ENCODE measurements at regions of chr21 and their contacts with region 1.

Region 1: GRCh38 chr21:28745131-28746016 is 247.3 kb downstream of the LTN1 start:
- DNase-seq: peak; percentile 87
- H3K4me3 Mint-ChIP-seq: no peak overlapping the region
- H3K27ac Mint-ChIP-seq: no peak overlapping the region
- H3K4me1 Mint-ChIP-seq: no peaks in the 10 kb centered on the region
- H3K27me3 Mint-ChIP-seq: peaks cover 4% of the 10 kb centered on the region

Region 2: GRCh38 chr21:27700974-27701614 is 1044.3 kb before region 1 on chr21:
- CTCF ChIA-PET with region 1: interaction called, 11 read pairs
- intact Hi-C with region 1: loop called (anchors 1 kb)
- DNase-seq: peak; percentile 80
- H3K4me3 Mint-ChIP-seq: no peak overlapping the region
- H3K27ac Mint-ChIP-seq: no peak overlapping the region
- H3K4me1 Mint-ChIP-seq: peaks cover 2% of the 10 kb centered on the region
- H3K27me3 Mint-ChIP-seq: no peaks in the 10 kb centered on the region

Region 3: DNA sequence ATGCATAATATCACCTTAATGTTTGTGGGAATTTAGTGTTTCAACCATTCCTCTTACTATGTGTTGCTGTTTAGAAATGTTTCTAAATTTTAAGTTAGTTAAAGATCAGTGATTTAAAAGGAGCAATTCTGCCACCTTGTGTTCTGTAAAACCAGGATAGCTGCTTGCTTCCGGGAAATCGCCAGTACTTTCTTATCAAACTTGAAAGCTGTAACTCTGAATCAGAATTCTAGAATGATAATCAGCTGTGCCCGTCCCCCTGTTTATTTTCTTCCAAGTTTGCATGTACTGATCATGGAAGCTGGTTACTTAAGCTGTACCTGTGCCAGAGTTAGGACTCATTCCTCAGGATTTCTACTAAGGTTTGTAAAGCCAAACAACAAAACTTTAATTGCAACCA is 409.1 kb before region 1 on chr21:
- CTCF ChIA-PET with region 1: interaction called, 5 read pairs
- intact Hi-C with region 1: loop called (anchors 2 kb)
- DNase-seq: no peak
- H3K4me3 Mint-ChIP-seq: no peak overlapping the region
- H3K27ac Mint-ChIP-seq: no peak overlapping the region
- H3K4me1 Mint-ChIP-seq: peaks cover 2% of the 10 kb centered on the region
- H3K27me3 Mint-ChIP-seq: no peaks in the 10 kb centered on the region

Region 4: DNA sequence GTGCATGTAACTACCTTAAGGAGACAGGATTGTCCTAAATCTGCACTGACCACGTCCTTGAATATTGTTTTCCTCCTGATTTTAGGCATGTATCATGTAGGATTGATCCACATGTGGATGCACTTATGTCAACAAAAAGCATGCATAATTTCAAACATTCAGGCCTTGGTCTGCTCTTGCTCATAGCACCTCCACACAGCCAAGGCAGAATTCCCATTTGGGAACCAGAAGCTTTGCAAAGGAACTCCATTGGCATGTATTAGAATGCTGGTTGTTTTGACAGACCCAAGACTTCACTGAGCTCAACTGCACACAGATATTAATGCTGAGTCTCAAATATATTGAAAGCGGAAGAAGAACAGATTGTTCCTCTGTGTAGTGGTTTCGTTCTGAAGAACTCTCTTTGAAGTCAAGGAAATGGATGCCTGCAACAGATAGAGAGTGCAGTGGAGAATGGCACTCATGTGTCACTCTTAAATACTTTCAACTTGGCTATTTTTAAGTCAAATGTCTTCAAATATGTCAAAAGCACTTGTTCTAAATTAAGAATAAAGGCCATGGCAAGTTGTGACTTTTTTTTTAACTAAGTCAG is 140.3 kb before region 1 on chr21:
- CTCF ChIA-PET with region 1: interaction called, 8 read pairs
- intact Hi-C with region 1: loop called (anchors 1 kb)
- DNase-seq: peak; percentile 7
- H3K4me3 Mint-ChIP-seq: no peak overlapping the region
- H3K27ac Mint-ChIP-seq: no peak overlapping the region
- H3K4me1 Mint-ChIP-seq: peaks cover 19% of the 10 kb centered on the region
- H3K27me3 Mint-ChIP-seq: no peaks in the 10 kb centered on the region

Region 5: GRCh38 chr21:28771790-28772501 is 26.6 kb after region 1 on chr21:
- CTCF ChIA-PET with region 1: interaction called, 22 read pairs
- intact Hi-C with region 1: no loop called
- DNase-seq: peak; percentile 23
- H3K4me3 Mint-ChIP-seq: no peak overlapping the region
- H3K27ac Mint-ChIP-seq: no peak overlapping the region
- H3K4me1 Mint-ChIP-seq: peaks cover 52% of the 10 kb centered on the region
- H3K27me3 Mint-ChIP-seq: no peaks in the 10 kb centered on the region

Region 6: DNA sequence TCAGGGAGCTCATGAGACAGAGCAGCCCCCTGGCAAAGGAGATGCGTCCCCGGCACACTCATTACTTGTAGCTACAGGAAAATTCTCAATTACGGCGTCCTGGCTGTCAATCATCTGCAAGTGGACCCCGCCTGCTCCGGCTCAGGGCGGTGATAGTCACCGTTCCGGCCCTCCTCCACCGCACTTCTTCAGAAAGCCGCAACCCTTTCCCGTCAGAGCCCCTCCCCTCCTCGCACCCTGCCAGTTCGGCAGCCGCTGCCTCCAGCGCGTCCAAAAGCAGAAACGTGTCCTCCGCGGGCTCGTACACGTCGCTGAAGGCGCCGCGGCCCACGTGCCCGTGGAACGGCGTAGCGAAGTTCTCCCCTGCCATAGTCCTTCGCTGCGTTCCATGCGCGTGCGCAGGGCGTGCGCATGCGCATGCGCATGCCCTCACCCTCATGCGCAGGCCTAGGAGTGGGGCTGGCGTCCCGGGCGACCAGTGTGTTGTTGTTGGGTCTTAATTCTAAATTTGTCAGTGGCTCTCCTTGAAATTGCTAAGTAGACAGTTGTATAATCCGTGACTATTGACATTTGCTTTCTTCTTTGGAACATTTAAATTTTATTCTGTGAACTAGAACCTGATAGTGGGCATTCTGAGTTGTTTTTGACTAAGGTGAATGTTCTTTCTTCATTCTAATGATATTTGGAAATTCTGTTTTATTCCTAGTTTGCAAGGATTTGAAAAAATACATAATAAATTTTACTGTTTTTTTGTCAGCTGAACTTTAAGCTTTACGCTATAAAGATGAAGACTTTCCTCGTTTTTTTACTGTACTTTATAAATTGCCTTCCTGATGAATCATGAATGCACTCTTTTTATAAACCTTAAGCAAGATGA is 139.8 kb after region 1 on chr21:
- CTCF ChIA-PET with region 1: interaction called, 11 read pairs
- intact Hi-C with region 1: no loop called
- DNase-seq: peak; percentile 92
- H3K4me3 Mint-ChIP-seq: peak overlapping the region; percentile 90
- H3K27ac Mint-ChIP-seq: peak overlapping the region; percentile 97
- H3K4me1 Mint-ChIP-seq: peaks cover 7% of the 10 kb centered on the region
- H3K27me3 Mint-ChIP-seq: no peaks in the 10 kb centered on the region